Natural killer cell (primary cell): ENCODE measurements at regions of chr17 and their contacts with region 1.

Region 1: DNA sequence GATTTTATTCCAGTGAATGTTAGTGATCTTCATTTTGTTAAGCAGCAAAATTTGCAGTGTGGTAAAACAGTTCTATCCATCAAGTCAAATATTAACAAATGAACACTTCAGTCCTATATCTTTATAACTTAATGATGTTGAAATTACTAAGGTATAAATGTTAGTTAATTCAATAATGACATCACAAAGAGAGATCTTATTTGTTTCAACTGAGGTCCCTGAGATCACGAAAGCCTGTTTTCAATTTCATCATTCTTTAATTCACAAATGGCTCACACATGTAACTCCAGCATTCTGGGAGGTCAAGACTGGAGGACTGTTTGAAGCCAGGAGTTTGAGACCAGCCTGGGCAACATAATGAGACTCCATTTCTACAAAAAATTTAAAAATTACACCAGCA is 13.9 kb downstream of the SMURF2 start:
- DNase-seq: no peak
- ATAC-seq: no peak
- H3K4me3 ChIP-seq: no peak overlapping the region
- H3K4me3 Mint-ChIP-seq: no peak overlapping the region
- H3K27ac ChIP-seq: no peak overlapping the region
- H3K27ac Mint-ChIP-seq: peak overlapping the region; percentile 43 to 72
- H3K4me1 ChIP-seq: peaks cover 15% of the 10 kb centered on the region
- H3K4me1 Mint-ChIP-seq: peaks cover 39 to 51% of the 10 kb centered on the region in 2 donors
- H3K27me3 ChIP-seq: no peaks in the 10 kb centered on the region
- H3K27me3 Mint-ChIP-seq: no peaks in the 10 kb centered on the region
- CTCF ChIP-seq: no peak

Region 2: DNA sequence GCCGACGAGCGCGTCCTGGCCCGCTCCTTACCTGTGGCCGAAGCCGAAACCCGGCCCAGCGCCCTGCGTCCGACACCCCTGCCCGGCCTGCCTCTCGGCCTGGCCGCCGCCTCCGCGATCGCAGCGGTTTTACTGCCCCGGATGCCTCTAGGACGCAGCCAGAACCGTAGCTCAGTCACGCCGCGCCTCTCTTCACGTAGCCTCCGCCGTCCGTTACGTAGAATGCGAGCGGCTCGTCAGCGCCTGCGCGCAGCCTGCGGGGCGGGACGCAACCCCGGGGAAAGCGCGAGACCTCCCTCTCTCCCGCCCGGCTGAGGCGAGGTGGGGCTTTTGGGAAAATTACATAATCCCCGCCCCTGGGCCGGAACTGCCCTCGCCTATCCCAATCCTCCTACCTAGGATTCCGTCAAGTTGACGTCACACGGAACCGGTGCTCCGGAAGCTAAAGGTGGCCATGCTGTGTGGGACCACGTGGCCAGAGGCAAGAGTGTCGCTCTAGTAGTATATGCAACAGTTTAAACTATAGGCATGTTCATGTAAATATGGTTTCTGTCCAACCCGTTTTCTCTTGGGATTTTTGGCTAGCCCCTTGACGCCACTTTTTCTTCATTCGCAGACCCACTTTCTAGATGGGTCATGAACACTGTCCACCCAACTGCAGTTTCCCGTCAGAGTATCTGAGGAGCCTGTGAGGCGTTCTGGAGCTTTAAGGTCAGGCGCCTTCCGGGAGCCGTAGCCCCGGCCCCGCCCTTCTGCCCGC is 874.7 kb before region 1 on chr17 and contains the start of gene CCDC47:
- intact Hi-C with region 1: no loop called
- DNase-seq: peak; percentile 93 to 99
- ATAC-seq: peak; percentile 81 to 94 (median 84)
- H3K4me3 ChIP-seq: peak within 1 kb of the TSS; percentile 88
- H3K4me3 Mint-ChIP-seq: peak within 1 kb of the TSS; percentile 95
- H3K27ac ChIP-seq: peak within 1 kb of the TSS; percentile 94
- H3K27ac Mint-ChIP-seq: peak within 1 kb of the TSS; percentile 98 to 99
- H3K4me1 ChIP-seq: peaks cover 22% of the 10 kb centered on the region
- H3K4me1 Mint-ChIP-seq: peaks cover 51 to 65% of the 10 kb centered on the region in 2 donors
- H3K27me3 ChIP-seq: no peaks in the 10 kb centered on the region
- H3K27me3 Mint-ChIP-seq: no peaks in the 10 kb centered on the region
- CTCF ChIP-seq: no peak
- total RNA-seq, gene CCDC47: 37.9 to 45.2 (median 41.7) TPM

Region 3: GRCh38 chr17:64506576-64507477 is 141.4 kb before region 1 on chr17 and contains the start of gene CEP95:
- intact Hi-C with region 1: loop called (anchors 5 kb)
- DNase-seq: peak; percentile 95 to 98
- ATAC-seq: peak; percentile 58 to 83 (median 72)
- H3K4me3 ChIP-seq: peak within 1 kb of the TSS; percentile 85
- H3K4me3 Mint-ChIP-seq: peak within 1 kb of the TSS; percentile 95
- H3K27ac ChIP-seq: peak within 1 kb of the TSS; percentile 94
- H3K27ac Mint-ChIP-seq: peak within 1 kb of the TSS; percentile 97 to 99
- H3K4me1 ChIP-seq: peaks cover 12% of the 10 kb centered on the region
- H3K4me1 Mint-ChIP-seq: peaks cover 62 to 67% of the 10 kb centered on the region in 2 donors
- H3K27me3 ChIP-seq: no peaks in the 10 kb centered on the region
- H3K27me3 Mint-ChIP-seq: no peaks in the 10 kb centered on the region
- CTCF ChIP-seq: no peak
- total RNA-seq, gene CEP95: 152 to 187 (median 186) TPM

Region 4: GRCh38 chr17:64572638-64573154 is 75.5 kb before region 1 on chr17:
- intact Hi-C with region 1: no loop called
- DNase-seq: peak in 1 of 2 donors; percentile 21
- ATAC-seq: peak; percentile 87 to 91 (median 88)
- H3K4me3 ChIP-seq: no peak overlapping the region
- H3K4me3 Mint-ChIP-seq: no peak overlapping the region
- H3K27ac ChIP-seq: no peak overlapping the region
- H3K27ac Mint-ChIP-seq: peak overlapping the region; percentile 78 to 90
- H3K4me1 ChIP-seq: peaks cover 3% of the 10 kb centered on the region
- H3K4me1 Mint-ChIP-seq: peaks cover 4 to 6% of the 10 kb centered on the region in 2 donors
- H3K27me3 ChIP-seq: no peaks in the 10 kb centered on the region
- H3K27me3 Mint-ChIP-seq: no peaks in the 10 kb centered on the region
- CTCF ChIP-seq: no peak

Region 5: GRCh38 chr17:64599187-64599676 is 49.0 kb before region 1 on chr17:
- intact Hi-C with region 1: loop called (anchors 2 kb)
- DNase-seq: peak; percentile 60 to 75
- ATAC-seq: peak; percentile 97 to 99 (median 98)
- H3K4me3 ChIP-seq: no peak overlapping the region
- H3K4me3 Mint-ChIP-seq: peak overlapping the region; percentile 74
- H3K27ac ChIP-seq: peak overlapping the region; percentile 57
- H3K27ac Mint-ChIP-seq: peak overlapping the region; percentile 92 to 93
- H3K4me1 ChIP-seq: peaks cover 13% of the 10 kb centered on the region
- H3K4me1 Mint-ChIP-seq: peaks cover 24 to 35% of the 10 kb centered on the region in 2 donors
- H3K27me3 ChIP-seq: no peaks in the 10 kb centered on the region
- H3K27me3 Mint-ChIP-seq: no peaks in the 10 kb centered on the region
- CTCF ChIP-seq: no peak